Mammary epithelial cell (primary cell): ENCODE measurements at regions of chr10 and their contacts with region 1.

Region 1: GRCh38 chr10:112991888-112992581 is 42.0 kb downstream of the TCF7L2 start:
- DNase-seq: peak; percentile 96
- H3K4me3 ChIP-seq: peak overlapping the region in 1 of 3 experiments; percentile 2
- H3K27ac ChIP-seq: peak overlapping the region; percentile 89
- H3K4me1 ChIP-seq: peaks cover 55% of the 10 kb centered on the region
- H3K27me3 ChIP-seq: no peaks in the 10 kb centered on the region
- CTCF ChIP-seq: no peak

Region 2: DNA sequence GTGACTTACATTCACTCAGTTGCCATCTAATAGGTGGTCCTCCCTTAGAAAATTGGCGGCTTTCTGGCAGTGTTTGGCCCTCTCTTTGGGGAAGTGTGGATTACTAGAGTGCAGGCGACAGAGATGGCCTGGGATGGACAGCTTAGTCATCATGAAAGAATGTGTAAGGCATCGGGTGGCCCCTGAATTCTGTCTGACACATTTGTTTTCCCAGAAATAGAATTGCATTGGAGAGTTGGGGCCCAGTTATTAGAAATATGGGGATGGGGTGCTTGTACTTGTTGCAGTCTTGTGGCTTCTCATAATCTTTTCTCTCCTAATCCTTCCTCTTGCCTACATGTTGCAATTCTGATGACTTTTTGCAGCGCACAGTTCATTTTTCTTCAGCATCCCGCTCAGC is 28.2 kb before region 1 on chr10:
- CTCF ChIA-PET with region 1: no interaction called
- dilution Hi-C with region 1: loop called (anchors 5 kb)
- in situ Hi-C with region 1: no loop called
- intact Hi-C with region 1: no loop called
- DNase-seq: no peak
- H3K4me3 ChIP-seq: no peak overlapping the region
- H3K27ac ChIP-seq: no peak overlapping the region
- H3K4me1 ChIP-seq: peaks cover 37% of the 10 kb centered on the region
- H3K27me3 ChIP-seq: no peaks in the 10 kb centered on the region
- CTCF ChIP-seq: no peak

Region 3: DNA sequence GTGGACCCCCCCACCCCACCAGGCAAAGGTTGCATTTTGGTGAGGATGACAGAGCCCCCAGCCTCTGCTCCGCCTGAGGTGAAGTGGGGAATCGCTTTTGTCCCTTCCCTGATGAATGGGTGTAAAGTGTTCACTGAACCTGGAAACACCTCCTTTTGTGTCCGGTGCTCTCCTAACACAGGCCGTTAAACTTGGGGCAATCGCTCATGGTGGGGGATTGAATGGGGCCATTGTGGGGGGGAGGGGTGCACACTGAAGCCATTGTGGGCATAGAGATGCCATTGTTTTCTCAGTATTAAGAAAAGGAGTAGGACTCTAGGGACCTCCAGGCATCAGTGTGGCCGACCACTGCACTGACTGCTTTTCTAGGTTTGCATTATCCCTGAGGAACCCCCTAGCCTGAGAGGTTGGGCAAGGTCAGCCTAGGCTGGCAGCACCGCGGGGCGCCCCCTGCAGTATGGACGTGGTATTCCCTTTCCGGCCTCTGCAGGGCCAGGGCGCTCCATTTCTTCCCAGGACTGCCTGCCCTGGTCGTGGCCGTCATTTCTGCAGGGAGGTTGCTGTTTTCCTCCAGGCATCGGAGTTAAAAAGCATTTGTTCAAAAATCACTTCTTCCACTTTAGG is 116.3 kb after region 1 on chr10:
- CTCF ChIA-PET with region 1: no interaction called
- dilution Hi-C with region 1: no loop called
- in situ Hi-C with region 1: no loop called
- intact Hi-C with region 1: loop called (anchors 5 kb)
- DNase-seq: no peak
- H3K4me3 ChIP-seq: no peak overlapping the region
- H3K27ac ChIP-seq: no peak overlapping the region
- H3K4me1 ChIP-seq: peaks cover 11% of the 10 kb centered on the region
- H3K27me3 ChIP-seq: no peaks in the 10 kb centered on the region
- CTCF ChIP-seq: peak; percentile 54 to 63